ENCODE measurements at regions of chr1 and their contacts with region 1.

Region 1: GRCh38 chr1:168637350-168637991 is 61.1 kb downstream of the XCL1 start:
- DNase-seq: no peak
- H3K4me3 ChIP-seq: no peak overlapping the region
- H3K27ac ChIP-seq: no peak overlapping the region
- H3K4me1 ChIP-seq: no peaks in the 10 kb centered on the region
- H3K27me3 ChIP-seq: no peaks in the 10 kb centered on the region
- CTCF ChIP-seq: no peak
- EP300 ChIP-seq: no peak
- POLR2A ChIP-seq: no peak

Region 2: GRCh38 chr1:168783458-168784230 is 146.2 kb after region 1 on chr1:
- intact Hi-C with region 1: loop called in 1 of 4 experiments (anchors 10 kb)
- DNase-seq: peak in 2 of 5 donors; percentile 16 to 29
- H3K4me3 ChIP-seq: no peak overlapping the region
- H3K27ac ChIP-seq: peak overlapping the region in 1 of 2 donors; percentile 27
- H3K4me1 ChIP-seq: peaks cover 1% of the 10 kb centered on the region
- H3K27me3 ChIP-seq: no peaks in the 10 kb centered on the region
- CTCF ChIP-seq: no peak
- EP300 ChIP-seq: no peak
- POLR2A ChIP-seq: no peak

Measured in ovary (tissue), 10 donors.